Endothelial cell of umbilical vein (primary cell): ENCODE measurements at regions of chr5 and their contacts with region 1.

Region 1: DNA sequence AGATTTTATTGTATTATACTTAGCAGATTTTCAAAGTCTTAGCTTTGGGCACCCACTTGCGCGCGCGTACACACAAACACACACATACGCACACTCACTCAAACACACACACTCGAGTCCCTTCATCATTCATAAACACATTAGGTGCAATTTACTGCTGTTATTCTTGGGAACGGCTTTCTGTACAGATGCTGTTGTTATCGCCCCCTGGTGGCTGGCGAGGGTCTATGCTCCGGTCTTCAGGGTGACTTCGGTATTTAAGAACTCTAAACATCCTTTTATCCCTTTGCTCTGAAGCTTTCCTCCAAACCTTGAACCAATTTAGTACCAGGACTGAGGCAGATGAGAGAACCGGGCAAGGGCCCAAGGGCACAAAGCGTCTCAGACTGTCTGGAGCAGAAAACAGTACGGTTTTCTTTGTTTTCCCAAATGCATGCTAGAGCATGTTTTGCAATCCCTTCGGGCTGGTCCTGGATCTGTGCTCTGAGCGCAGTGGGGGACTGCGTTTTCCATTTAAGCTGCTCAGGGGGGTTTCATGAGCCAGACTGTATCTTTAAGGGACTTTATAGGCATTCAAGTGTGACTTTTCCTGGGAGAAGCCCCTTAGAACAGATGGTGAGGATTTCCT is 1.7 kb upstream of the SLIT3 start:
- DNase-seq: peak; percentile 85
- H3K4me3 ChIP-seq: no peak overlapping the region
- H3K27ac ChIP-seq: no peak overlapping the region
- H3K4me1 ChIP-seq: peaks cover 4% of the 10 kb centered on the region
- H3K27me3 ChIP-seq: peaks cover 21 to 36% of the 10 kb centered on the region in 2 experiments
- CTCF ChIP-seq: peak; percentile 90 to 93
- POLR2A ChIP-seq: no peak

Region 2: GRCh38 chr5:168706655-168707069 is 595.9 kb before region 1 on chr5:
- CTCF ChIA-PET with region 1: interaction called, 3 read pairs
- POLR2A ChIA-PET with region 1: no interaction called
- dilution Hi-C with region 1: no loop called
- intact Hi-C with region 1: loop called (anchors 1 kb)
- DNase-seq: peak; percentile 9
- H3K4me3 ChIP-seq: no peak overlapping the region
- H3K27ac ChIP-seq: no peak overlapping the region
- H3K4me1 ChIP-seq: no peaks in the 10 kb centered on the region
- H3K27me3 ChIP-seq: no peaks in the 10 kb centered on the region
- CTCF ChIP-seq: peak in 1 of 2 donors; percentile 47
- POLR2A ChIP-seq: no peak

Region 3: DNA sequence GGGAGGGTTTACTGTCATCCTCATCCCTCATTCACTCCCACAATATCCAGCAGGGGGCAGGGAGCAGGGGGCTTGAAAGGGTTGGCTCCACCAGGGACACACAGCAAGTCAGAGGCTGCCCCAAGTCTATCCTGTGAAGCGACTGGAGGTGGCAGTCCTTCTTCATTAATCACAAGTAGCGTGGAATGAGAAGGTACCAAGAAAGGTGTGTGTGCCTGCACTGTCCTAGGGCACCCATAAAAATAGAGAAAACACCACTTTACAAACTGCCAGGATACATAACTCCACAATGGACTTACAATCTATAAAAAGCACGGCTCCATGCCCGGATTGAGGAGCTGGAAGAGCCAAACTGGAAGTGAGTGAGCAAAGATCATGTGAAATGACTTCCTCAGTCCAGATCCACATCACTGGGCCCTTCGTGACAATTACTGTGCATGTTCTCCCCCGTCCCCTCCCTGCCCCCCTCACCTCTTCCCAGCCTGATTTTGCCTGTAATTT is 185.6 kb before region 1 on chr5:
- CTCF ChIA-PET with region 1: no interaction called
- POLR2A ChIA-PET with region 1: no interaction called
- dilution Hi-C with region 1: no loop called
- intact Hi-C with region 1: loop called (anchors 5 kb)
- DNase-seq: peak; percentile 14
- H3K4me3 ChIP-seq: no peak overlapping the region
- H3K27ac ChIP-seq: no peak overlapping the region
- H3K4me1 ChIP-seq: no peaks in the 10 kb centered on the region
- H3K27me3 ChIP-seq: no peaks in the 10 kb centered on the region
- CTCF ChIP-seq: no peak
- POLR2A ChIP-seq: no peak

Region 4: GRCh38 chr5:170302653-170303501 is 1000.3 kb after region 1 on chr5:
- CTCF ChIA-PET with region 1: no interaction called
- POLR2A ChIA-PET with region 1: no interaction called
- dilution Hi-C with region 1: no loop called
- intact Hi-C with region 1: no loop called
- DNase-seq: no peak
- H3K4me3 ChIP-seq: no peak overlapping the region
- H3K27ac ChIP-seq: no peak overlapping the region
- H3K4me1 ChIP-seq: no peaks in the 10 kb centered on the region
- H3K27me3 ChIP-seq: no peaks in the 10 kb centered on the region
- CTCF ChIP-seq: no peak
- POLR2A ChIP-seq: no peak